ENCODE measurements at regions of chr9 and their contacts with region 1.

Region 1: DNA sequence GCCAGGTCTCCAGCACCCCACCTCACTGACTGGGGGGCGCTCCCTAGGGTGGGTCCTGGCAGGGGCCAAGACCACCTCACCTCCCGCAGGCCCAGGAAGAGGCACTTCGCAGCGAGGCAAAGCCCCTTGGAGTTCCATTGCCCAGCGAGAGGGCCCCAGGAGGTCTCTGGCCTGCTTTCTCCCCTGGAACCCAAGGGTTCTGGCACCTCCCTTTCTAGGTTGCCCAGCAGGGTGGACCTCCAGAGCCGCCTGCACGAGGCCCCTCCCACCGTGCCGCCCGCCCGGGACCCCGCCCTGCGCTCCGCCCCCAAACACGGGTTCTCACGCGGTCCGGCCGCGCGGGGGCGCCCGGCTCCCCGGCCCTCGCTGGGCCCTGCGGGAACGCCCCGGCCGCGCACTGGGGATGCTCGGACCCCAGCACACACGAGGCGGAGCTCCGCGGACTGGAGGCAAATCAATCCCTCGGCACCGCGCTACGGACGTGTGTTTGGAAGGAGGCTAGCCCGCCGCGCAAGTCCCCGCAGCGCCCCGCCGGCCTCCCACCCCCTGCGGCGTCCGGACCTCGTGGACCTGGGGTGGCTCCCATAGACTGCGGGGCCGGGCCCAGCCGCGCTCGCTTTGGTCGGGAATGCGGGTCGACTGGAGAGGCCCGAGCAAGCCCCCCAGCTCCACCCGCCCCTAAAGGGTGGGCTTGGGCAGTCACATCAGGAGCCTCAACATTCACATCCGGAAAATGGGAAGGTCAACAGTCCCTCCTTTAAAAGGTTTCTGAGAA is 99.5 kb upstream of the LMX1B start:
- DNase-seq: peak; percentile 76
- ATAC-seq: peak; percentile 50
- H3K4me3 Mint-ChIP-seq: no peak overlapping the region
- H3K27ac Mint-ChIP-seq: no peak overlapping the region
- H3K4me1 Mint-ChIP-seq: peaks cover 28% of the 10 kb centered on the region
- H3K27me3 Mint-ChIP-seq: peaks cover 66% of the 10 kb centered on the region

Region 2: GRCh38 chr9:126203126-126203712 is 311.0 kb before region 1 on chr9:
- CTCF ChIA-PET with region 1: no interaction called
- POLR2A ChIA-PET with region 1: no interaction called
- intact Hi-C with region 1: no loop called
- DNase-seq: peak; percentile 31
- ATAC-seq: no peak
- H3K4me3 Mint-ChIP-seq: no peak overlapping the region
- H3K27ac Mint-ChIP-seq: no peak overlapping the region
- H3K4me1 Mint-ChIP-seq: no peaks in the 10 kb centered on the region
- H3K27me3 Mint-ChIP-seq: peaks cover 31% of the 10 kb centered on the region

Region 3: DNA sequence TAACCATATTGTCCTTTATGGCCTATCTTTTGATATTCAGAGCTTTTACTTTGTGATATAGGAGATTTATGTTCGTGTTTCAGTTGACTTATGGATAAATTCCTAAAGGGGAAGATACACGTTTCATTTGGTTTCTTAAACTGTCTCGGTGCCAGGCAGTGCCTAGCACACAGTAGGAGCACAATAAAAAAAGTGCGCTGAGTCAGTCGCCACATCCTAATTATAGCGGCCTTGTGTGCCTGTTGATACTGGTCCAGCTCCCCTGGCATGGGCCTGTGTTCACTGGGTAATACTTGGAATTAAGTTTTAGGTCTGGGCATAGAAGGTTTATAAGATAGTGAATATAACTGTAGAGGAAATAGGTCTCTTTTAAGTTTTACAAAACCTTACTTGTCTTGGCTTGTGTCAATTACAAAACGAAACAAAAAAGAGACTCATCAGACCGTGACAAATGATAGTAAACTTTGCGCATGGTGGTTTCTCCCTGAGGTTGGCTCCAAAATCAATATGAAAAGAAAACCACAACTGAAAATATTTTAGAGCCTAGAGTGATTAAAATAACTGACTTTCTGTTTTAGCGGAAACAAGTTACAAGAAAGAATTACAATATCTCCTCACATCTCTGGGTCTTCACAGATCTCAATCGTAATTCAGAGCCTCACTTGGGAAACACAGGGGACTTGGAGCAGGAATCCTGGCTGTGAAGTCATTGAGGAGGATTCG is 102.8 kb before region 1 on chr9:
- CTCF ChIA-PET with region 1: no interaction called
- POLR2A ChIA-PET with region 1: no interaction called
- intact Hi-C with region 1: loop called in 1 of 2 experiments (anchors 1 kb)
- DNase-seq: peak; percentile 62
- ATAC-seq: peak; percentile 89
- H3K4me3 Mint-ChIP-seq: peak overlapping the region; percentile 54
- H3K27ac Mint-ChIP-seq: peak overlapping the region; percentile 72
- H3K4me1 Mint-ChIP-seq: peaks cover 35% of the 10 kb centered on the region
- H3K27me3 Mint-ChIP-seq: no peaks in the 10 kb centered on the region

Region 4: DNA sequence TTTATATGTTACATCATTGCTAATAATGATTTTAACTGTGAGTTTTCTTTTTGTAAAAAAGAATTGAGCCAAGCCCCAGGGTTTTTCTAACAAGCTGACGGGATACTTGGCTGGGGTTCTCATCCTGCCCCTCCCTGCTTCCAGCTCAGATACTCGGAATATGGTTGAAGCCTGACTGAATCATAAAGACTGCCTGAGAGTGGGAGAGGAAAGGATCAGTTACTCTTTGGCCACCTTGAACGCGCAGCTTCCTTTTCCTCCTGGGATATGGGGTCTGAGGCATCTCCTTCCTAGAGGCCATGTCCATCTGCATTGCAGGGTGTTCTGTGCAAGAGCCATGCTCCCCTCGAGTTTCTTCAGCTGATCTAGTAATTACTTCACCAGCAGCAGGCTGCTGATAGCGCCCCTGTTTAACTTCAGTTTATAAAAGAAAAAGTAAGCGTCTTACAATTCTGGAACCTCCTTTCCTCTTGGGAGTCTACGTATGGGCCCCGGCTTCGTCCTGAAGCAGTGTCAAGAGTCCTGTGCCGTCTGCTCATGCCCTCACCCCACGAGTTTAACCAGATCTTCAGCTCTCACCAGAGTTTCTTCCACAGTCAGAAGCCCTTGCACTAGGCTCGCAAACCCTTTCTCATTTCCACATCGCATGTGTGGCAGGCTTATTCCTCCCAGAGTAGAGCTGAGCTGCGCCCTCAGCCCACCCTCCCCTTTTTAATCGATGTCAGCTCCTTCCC is 57.6 kb before region 1 on chr9:
- CTCF ChIA-PET with region 1: no interaction called
- POLR2A ChIA-PET with region 1: no interaction called
- intact Hi-C with region 1: no loop called
- DNase-seq: no peak
- ATAC-seq: no peak
- H3K4me3 Mint-ChIP-seq: no peak overlapping the region
- H3K27ac Mint-ChIP-seq: no peak overlapping the region
- H3K4me1 Mint-ChIP-seq: peaks cover 3% of the 10 kb centered on the region
- H3K27me3 Mint-ChIP-seq: no peaks in the 10 kb centered on the region

Region 5: GRCh38 chr9:126471084-126471624 is 43.1 kb before region 1 on chr9:
- CTCF ChIA-PET with region 1: no interaction called
- POLR2A ChIA-PET with region 1: no interaction called
- intact Hi-C with region 1: loop called (anchors 1 to 2 kb)
- DNase-seq: peak; percentile 89
- ATAC-seq: peak; percentile 92
- H3K4me3 Mint-ChIP-seq: peak overlapping the region; percentile 39
- H3K27ac Mint-ChIP-seq: no peak overlapping the region
- H3K4me1 Mint-ChIP-seq: peaks cover 60% of the 10 kb centered on the region
- H3K27me3 Mint-ChIP-seq: peaks cover 6% of the 10 kb centered on the region

Region 6: GRCh38 chr9:126500684-126501382 is 13.4 kb before region 1 on chr9:
- CTCF ChIA-PET with region 1: interaction called, 28 read pairs
- POLR2A ChIA-PET with region 1: interaction called, 4 read pairs
- intact Hi-C with region 1: no loop called
- DNase-seq: peak; percentile 83
- ATAC-seq: peak; percentile 87
- H3K4me3 Mint-ChIP-seq: no peak overlapping the region
- H3K27ac Mint-ChIP-seq: no peak overlapping the region
- H3K4me1 Mint-ChIP-seq: peaks cover 5% of the 10 kb centered on the region
- H3K27me3 Mint-ChIP-seq: peaks cover 8% of the 10 kb centered on the region

Region 7: GRCh38 chr9:126558051-126558665 is 43.9 kb after region 1 on chr9:
- CTCF ChIA-PET with region 1: interaction called, 4 read pairs
- POLR2A ChIA-PET with region 1: no interaction called
- intact Hi-C with region 1: loop called (anchors 1 to 5 kb)
- DNase-seq: peak; percentile 81
- ATAC-seq: peak; percentile 77
- H3K4me3 Mint-ChIP-seq: no peak overlapping the region
- H3K27ac Mint-ChIP-seq: no peak overlapping the region
- H3K4me1 Mint-ChIP-seq: no peaks in the 10 kb centered on the region
- H3K27me3 Mint-ChIP-seq: peaks cover 25% of the 10 kb centered on the region

Region 8: GRCh38 chr9:126804696-126805545 is 290.7 kb after region 1 on chr9 and contains the start of gene ZBTB43:
- CTCF ChIA-PET with region 1: no interaction called
- POLR2A ChIA-PET with region 1: no interaction called
- intact Hi-C with region 1: loop called in 1 of 2 experiments (anchors 10 kb)
- DNase-seq: peak; percentile 99
- ATAC-seq: peak; percentile 85
- H3K4me3 Mint-ChIP-seq: peak within 1 kb of the TSS; percentile 96
- H3K27ac Mint-ChIP-seq: peak within 1 kb of the TSS; percentile 100
- H3K4me1 Mint-ChIP-seq: peaks cover 36% of the 10 kb centered on the region
- H3K27me3 Mint-ChIP-seq: no peaks in the 10 kb centered on the region
- total RNA-seq, gene ZBTB43: 19.3 to 23.0 TPM

Region 9: GRCh38 chr9:127004946-127005769 is 490.9 kb after region 1 on chr9:
- CTCF ChIA-PET with region 1: no interaction called
- POLR2A ChIA-PET with region 1: no interaction called
- intact Hi-C with region 1: loop called in 1 of 2 experiments (anchors 1 kb)
- DNase-seq: peak; percentile 87
- ATAC-seq: peak; percentile 98
- H3K4me3 Mint-ChIP-seq: no peak overlapping the region
- H3K27ac Mint-ChIP-seq: no peak overlapping the region
- H3K4me1 Mint-ChIP-seq: peaks cover 24% of the 10 kb centered on the region
- H3K27me3 Mint-ChIP-seq: peaks cover 45% of the 10 kb centered on the region